IMR-90 (cell line): ENCODE measurements at regions of chr12 and their contacts with region 1.

Region 1: GRCh38 chr12:46473634-46474329 is 101.2 kb upstream of the SLC38A2 start:
- DNase-seq: peak; percentile 94
- ATAC-seq: peak; percentile 81
- H3K4me3 ChIP-seq: peak overlapping the region; percentile 9; the same call in 1 of the 2 replicates
- H3K27ac ChIP-seq: peak overlapping the region; percentile 87
- H3K4me1 ChIP-seq: peaks cover 24% of the 10 kb centered on the region
- H3K27me3 ChIP-seq: no peaks in the 10 kb centered on the region
- CTCF ChIP-seq: no peak
- POLR2A ChIP-seq: no peak
- RAD21 ChIP-seq: peak; percentile 40

Region 2: GRCh38 chr12:46136249-46136648 is 337.5 kb before region 1 on chr12:
- CTCF ChIA-PET with region 1: no interaction called
- POLR2A ChIA-PET with region 1: no interaction called
- dilution Hi-C with region 1: no loop called
- in situ Hi-C with region 1: no loop called
- intact Hi-C with region 1: no loop called
- DNase-seq: no peak
- ATAC-seq: no peak
- H3K4me3 ChIP-seq: no peak overlapping the region
- H3K27ac ChIP-seq: no peak overlapping the region
- H3K4me1 ChIP-seq: no peaks in the 10 kb centered on the region
- H3K27me3 ChIP-seq: peaks cover 5% of the 10 kb centered on the region
- CTCF ChIP-seq: no peak
- POLR2A ChIP-seq: no peak
- RAD21 ChIP-seq: no peak

Region 3: GRCh38 chr12:46382964-46383653 is 90.7 kb before region 1 on chr12:
- CTCF ChIA-PET with region 1: no interaction called
- POLR2A ChIA-PET with region 1: interaction called, 5 read pairs
- dilution Hi-C with region 1: no loop called
- in situ Hi-C with region 1: no loop called
- intact Hi-C with region 1: loop called (anchors 2 kb)
- DNase-seq: peak; percentile 97
- ATAC-seq: peak; percentile 81
- H3K4me3 ChIP-seq: peak overlapping the region; percentile 69
- H3K27ac ChIP-seq: peak overlapping the region; percentile 98
- H3K4me1 ChIP-seq: peaks cover 17% of the 10 kb centered on the region
- H3K27me3 ChIP-seq: no peaks in the 10 kb centered on the region
- CTCF ChIP-seq: no peak
- POLR2A ChIP-seq: no peak
- RAD21 ChIP-seq: no peak

Region 4: DNA sequence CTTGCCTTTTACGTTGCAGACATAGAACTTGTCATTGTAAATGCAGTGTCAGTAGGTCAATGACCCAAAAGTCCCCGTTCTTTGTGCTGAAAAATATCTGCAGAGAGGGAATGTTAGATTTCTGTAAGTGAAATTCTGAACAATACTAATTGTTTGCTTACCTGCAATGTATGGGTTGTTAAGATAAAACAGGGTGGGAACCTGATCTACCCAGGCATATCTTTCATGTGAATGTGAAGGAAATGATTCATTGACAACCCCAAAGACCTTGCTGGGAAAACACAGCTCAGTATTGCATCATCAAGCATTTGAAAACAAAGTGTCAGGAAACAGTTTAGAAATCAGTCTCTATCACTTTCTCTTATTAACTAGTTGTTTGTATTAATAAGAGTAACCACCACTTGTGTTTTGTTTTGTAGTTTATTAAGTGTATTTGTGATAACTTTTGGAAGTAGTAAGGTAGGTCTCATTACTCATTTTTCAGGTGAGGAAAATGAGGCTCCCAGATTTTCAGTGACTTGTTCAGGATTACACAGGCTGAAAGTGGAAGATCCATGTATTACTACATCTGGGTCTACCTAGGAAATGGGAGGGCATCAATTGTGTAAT is 43.3 kb before region 1 on chr12:
- CTCF ChIA-PET with region 1: no interaction called
- POLR2A ChIA-PET with region 1: no interaction called
- dilution Hi-C with region 1: no loop called
- in situ Hi-C with region 1: no loop called
- intact Hi-C with region 1: loop called (anchors 5 kb)
- DNase-seq: peak; percentile 89
- ATAC-seq: peak; percentile 15; the same call in 1 of the 2 replicates
- H3K4me3 ChIP-seq: no peak overlapping the region
- H3K27ac ChIP-seq: peak overlapping the region; percentile 66
- H3K4me1 ChIP-seq: peaks cover 10% of the 10 kb centered on the region
- H3K27me3 ChIP-seq: no peaks in the 10 kb centered on the region
- CTCF ChIP-seq: no peak
- POLR2A ChIP-seq: no peak
- RAD21 ChIP-seq: no peak

Region 5: GRCh38 chr12:46556105-46556559 is 82.3 kb after region 1 on chr12:
- CTCF ChIA-PET with region 1: no interaction called
- POLR2A ChIA-PET with region 1: interaction called, 4 read pairs
- dilution Hi-C with region 1: no loop called
- in situ Hi-C with region 1: no loop called
- intact Hi-C with region 1: loop called (anchors 5 kb)
- DNase-seq: peak; percentile 99
- ATAC-seq: peak; percentile 73
- H3K4me3 ChIP-seq: peak overlapping the region; percentile 10; the same call in 1 of the 2 replicates
- H3K27ac ChIP-seq: peak overlapping the region; percentile 97; the same call in 1 of the 2 replicates
- H3K4me1 ChIP-seq: peaks cover 15% of the 10 kb centered on the region
- H3K27me3 ChIP-seq: no peaks in the 10 kb centered on the region
- CTCF ChIP-seq: no peak
- POLR2A ChIP-seq: no peak
- RAD21 ChIP-seq: peak; percentile 26; the same call in 1 of the 2 replicates

Region 6: GRCh38 chr12:46786774-46787173 is 313.0 kb after region 1 on chr12:
- CTCF ChIA-PET with region 1: no interaction called
- POLR2A ChIA-PET with region 1: no interaction called
- dilution Hi-C with region 1: no loop called
- in situ Hi-C with region 1: no loop called
- intact Hi-C with region 1: loop called (anchors 1 kb)
- DNase-seq: peak; percentile 85
- ATAC-seq: peak; percentile 84
- H3K4me3 ChIP-seq: no peak overlapping the region
- H3K27ac ChIP-seq: peak overlapping the region; percentile 96
- H3K4me1 ChIP-seq: peaks cover 19% of the 10 kb centered on the region
- H3K27me3 ChIP-seq: no peaks in the 10 kb centered on the region
- CTCF ChIP-seq: no peak
- POLR2A ChIP-seq: no peak
- RAD21 ChIP-seq: no peak